CD8-positive, alpha-beta T cell (primary cell): ENCODE measurements at regions of chr5 and their contacts with region 1.

Region 1: DNA sequence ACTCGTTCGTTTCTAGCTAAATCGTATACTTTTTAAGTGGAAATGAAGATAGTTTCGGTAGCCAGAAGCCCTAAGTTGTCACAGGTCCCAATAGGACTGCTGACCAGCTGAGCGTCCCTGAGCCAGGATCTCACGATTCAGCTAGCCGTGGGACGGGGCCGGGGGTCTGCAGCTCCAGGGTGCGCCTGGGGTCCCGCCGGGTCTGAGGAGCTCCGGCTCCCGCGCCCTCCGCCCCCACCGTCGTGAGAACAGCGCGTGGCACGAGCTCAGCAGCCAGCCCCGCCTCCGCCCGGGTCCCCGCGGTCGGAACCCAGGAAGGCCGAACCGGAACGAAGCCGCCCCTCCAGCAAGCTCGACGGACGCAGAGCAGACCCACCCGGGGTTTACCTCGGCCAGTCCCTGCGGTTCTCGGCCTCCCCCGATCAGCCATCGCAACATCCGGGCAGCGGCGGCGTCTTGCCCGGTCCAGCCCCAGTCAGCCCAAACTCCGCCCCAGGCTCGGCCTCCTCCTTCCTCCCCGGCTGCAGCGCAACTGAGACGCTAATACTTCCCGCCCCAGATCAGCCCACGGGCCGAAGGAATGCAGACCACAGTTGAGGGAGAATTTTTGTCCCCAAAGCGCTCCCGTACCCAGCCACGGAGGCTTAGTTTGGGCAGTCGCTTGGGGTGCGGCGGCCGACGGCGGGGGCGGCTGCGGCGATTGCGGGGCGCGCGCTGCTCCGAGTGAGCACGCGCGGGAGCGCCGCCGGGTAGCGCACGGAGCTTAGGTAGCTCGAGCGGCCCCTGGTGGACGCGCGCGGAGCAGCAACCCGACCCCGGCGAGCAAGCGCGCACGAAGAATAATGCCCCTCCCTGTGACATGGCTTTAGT is at the start of gene WDR41:
- DNase-seq: peak; percentile 74 to 92 (median 85)
- ATAC-seq: peak; percentile 94
- H3K4me3 ChIP-seq: peak within 1 kb of the TSS; percentile 79 to 87
- H3K4me3 Mint-ChIP-seq: peak within 1 kb of the TSS; percentile 87
- H3K27ac ChIP-seq: peak within 1 kb of the TSS; percentile 79 to 85
- H3K27ac Mint-ChIP-seq: peak within 1 kb of the TSS; percentile 91
- H3K4me1 ChIP-seq: peaks cover 5% of the 10 kb centered on the region
- H3K4me1 Mint-ChIP-seq: peaks cover 13% of the 10 kb centered on the region
- H3K27me3 ChIP-seq: no peaks in the 10 kb centered on the region
- H3K27me3 Mint-ChIP-seq: peaks cover 8% of the 10 kb centered on the region
- CTCF ChIP-seq: peak; percentile 86
- total RNA-seq, gene WDR41: 4.7 to 5.3 TPM

Region 2: DNA sequence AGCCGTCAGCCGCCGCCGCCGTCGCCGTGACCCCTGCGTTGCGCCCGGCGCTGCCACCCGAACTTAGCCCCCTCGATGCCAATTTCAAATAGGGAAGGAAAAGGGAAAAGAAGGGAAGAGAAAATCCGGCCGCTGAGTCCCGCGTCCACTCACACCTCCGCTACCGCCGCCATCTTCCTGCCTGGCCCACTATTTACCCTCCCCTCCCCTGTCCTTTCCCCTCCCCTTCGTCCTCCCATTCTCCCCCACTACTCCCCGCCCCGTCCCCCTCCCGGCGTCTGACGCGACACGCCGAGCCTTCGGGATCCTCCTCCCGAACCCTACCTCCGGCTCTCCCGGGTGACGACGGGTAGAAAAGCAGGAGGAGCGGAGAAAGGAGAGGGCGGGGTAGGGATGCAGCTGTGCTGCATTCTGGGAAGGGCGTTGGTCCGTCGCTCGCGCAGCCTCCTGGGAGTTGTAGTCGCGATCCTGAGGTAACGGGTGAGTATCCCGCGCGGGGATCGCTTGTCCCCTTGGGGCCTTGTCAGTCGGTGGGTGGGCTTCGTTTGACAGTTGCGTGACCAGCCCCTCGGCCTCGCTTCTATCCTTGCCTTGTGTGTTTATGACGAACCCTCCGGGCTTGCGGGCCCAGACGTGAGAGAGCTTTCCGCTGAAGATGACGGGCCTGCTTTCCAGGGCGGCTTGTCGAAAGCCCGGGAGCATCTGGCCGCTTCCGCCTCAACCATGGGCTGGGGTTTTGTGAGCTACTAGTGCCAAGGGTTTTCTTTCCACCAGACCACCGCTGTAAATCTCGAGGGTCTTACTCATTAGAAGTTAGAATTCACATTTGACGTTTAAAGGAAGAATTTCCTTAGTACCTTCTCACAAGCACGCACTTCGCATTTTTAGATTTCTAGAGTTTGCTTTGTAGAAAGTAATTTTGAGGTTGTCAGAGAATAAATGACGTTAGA is 1980.3 kb before region 1 on chr5 and contains the starts of genes CERT1 and POLK:
- CTCF ChIA-PET with region 1: no interaction called
- POLR2A ChIA-PET with region 1: no interaction called
- intact Hi-C with region 1: loop called in 1 of 2 experiments (anchors 10 kb)
- DNase-seq: peak; percentile 78 to 97 (median 89)
- ATAC-seq: peak; percentile 87
- H3K4me3 ChIP-seq: peak within 1 kb of the TSS; percentile 72 to 79
- H3K4me3 Mint-ChIP-seq: peak within 1 kb of the TSS; percentile 96
- H3K27ac ChIP-seq: peak within 1 kb of the TSS; percentile 74 to 78
- H3K27ac Mint-ChIP-seq: peak within 1 kb of the TSS; percentile 97
- H3K4me1 ChIP-seq: peaks cover 29% of the 10 kb centered on the region
- H3K4me1 Mint-ChIP-seq: peaks cover 64% of the 10 kb centered on the region
- H3K27me3 ChIP-seq: no peaks in the 10 kb centered on the region
- H3K27me3 Mint-ChIP-seq: no peaks in the 10 kb centered on the region
- CTCF ChIP-seq: no peak
- total RNA-seq, gene CERT1: 29.2 to 36.4 TPM
- total RNA-seq, gene POLK: 6.9 to 10.0 TPM

Region 3: GRCh38 chr5:76867827-76868693 is 624.0 kb before region 1 on chr5:
- CTCF ChIA-PET with region 1: interaction called, 3 read pairs
- POLR2A ChIA-PET with region 1: no interaction called
- intact Hi-C with region 1: loop called (anchors 1 to 2 kb)
- DNase-seq: peak; percentile 27 to 67 (median 48)
- ATAC-seq: peak; percentile 84
- H3K4me3 ChIP-seq: no peak overlapping the region
- H3K4me3 Mint-ChIP-seq: no peak overlapping the region
- H3K27ac ChIP-seq: no peak overlapping the region
- H3K27ac Mint-ChIP-seq: no peak overlapping the region
- H3K4me1 ChIP-seq: no peaks in the 10 kb centered on the region
- H3K4me1 Mint-ChIP-seq: no peaks in the 10 kb centered on the region
- H3K27me3 ChIP-seq: no peaks in the 10 kb centered on the region
- H3K27me3 Mint-ChIP-seq: no peaks in the 10 kb centered on the region
- CTCF ChIP-seq: peak; percentile 69

Region 4: GRCh38 chr5:77086689-77087483 is 405.1 kb before region 1 on chr5 and contains the start of gene ZBED3:
- CTCF ChIA-PET with region 1: no interaction called
- POLR2A ChIA-PET with region 1: no interaction called
- intact Hi-C with region 1: loop called (anchors 2 to 5 kb)
- DNase-seq: peak; percentile 29 to 87 (median 68)
- ATAC-seq: peak; percentile 87
- H3K4me3 ChIP-seq: peak within 1 kb of the TSS; percentile 74
- H3K4me3 Mint-ChIP-seq: peak within 1 kb of the TSS; percentile 92
- H3K27ac ChIP-seq: peak within 1 kb of the TSS; percentile 34 to 57
- H3K27ac Mint-ChIP-seq: peak within 1 kb of the TSS; percentile 84
- H3K4me1 ChIP-seq: peaks cover 16% of the 10 kb centered on the region
- H3K4me1 Mint-ChIP-seq: peaks cover 25% of the 10 kb centered on the region
- H3K27me3 ChIP-seq: no peaks in the 10 kb centered on the region
- H3K27me3 Mint-ChIP-seq: peaks cover 2% of the 10 kb centered on the region
- CTCF ChIP-seq: peak; percentile 31
- total RNA-seq, gene ZBED3: 11.6 to 12.3 TPM

Region 5: GRCh38 chr5:77620426-77620825 is 128.4 kb after region 1 on chr5:
- CTCF ChIA-PET with region 1: no interaction called
- POLR2A ChIA-PET with region 1: no interaction called
- intact Hi-C with region 1: no loop called
- DNase-seq: no peak
- ATAC-seq: no peak
- H3K4me3 ChIP-seq: no peak overlapping the region
- H3K4me3 Mint-ChIP-seq: no peak overlapping the region
- H3K27ac ChIP-seq: no peak overlapping the region
- H3K27ac Mint-ChIP-seq: no peak overlapping the region
- H3K4me1 ChIP-seq: no peaks in the 10 kb centered on the region
- H3K4me1 Mint-ChIP-seq: no peaks in the 10 kb centered on the region
- H3K27me3 ChIP-seq: peaks cover 5 to 8% of the 10 kb centered on the region in 2 experiments
- H3K27me3 Mint-ChIP-seq: peaks cover 54% of the 10 kb centered on the region
- CTCF ChIP-seq: no peak

Region 6: DNA sequence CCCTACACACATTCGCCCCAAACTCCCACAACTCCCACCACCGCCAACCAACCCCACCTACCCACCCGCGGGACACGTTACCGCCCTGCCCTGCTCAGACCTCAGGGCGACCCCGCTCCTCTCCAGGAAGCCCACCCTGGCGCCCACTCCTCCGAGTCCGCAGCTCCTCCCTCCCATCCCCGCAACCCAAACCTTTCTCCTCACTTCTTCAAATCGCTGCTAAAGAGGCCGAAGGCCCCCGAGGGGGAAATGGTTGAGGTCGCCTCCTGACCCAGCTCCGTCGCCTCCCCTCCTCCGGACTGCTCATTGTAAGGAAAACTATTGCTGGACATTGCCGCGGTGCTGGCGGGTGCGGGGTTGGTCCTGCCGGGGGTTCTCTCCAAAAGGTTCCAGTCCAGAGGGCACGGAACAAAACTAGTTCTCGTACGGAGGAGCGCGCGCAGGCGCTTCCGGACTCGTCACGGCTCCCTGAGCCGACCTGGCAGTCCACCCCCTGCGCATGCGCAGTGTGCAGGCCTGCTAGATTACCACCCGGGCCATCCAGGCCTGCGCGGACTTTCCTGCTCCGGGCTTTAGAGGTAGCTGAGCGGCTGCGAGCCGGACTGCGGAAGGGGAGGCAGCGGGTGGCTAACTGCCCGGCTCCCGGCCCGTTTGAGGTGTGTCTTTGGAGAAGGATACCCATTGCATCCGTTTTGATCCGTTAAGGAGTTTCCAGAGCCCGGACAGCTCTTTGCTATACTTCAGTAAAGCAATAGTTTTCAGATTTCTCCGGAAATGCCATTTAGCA is 802.4 kb after region 1 on chr5 and contains the start of gene AP3B1:
- CTCF ChIA-PET with region 1: no interaction called
- POLR2A ChIA-PET with region 1: no interaction called
- intact Hi-C with region 1: loop called in 1 of 2 experiments (anchors 2 kb)
- DNase-seq: peak; percentile 92 to 99 (median 98)
- ATAC-seq: peak; percentile 90
- H3K4me3 ChIP-seq: peak within 1 kb of the TSS; percentile 70 to 99
- H3K4me3 Mint-ChIP-seq: peak within 1 kb of the TSS; percentile 99
- H3K27ac ChIP-seq: peak within 1 kb of the TSS; percentile 88 to 90
- H3K27ac Mint-ChIP-seq: peak within 1 kb of the TSS; percentile 98
- H3K4me1 ChIP-seq: peaks cover 30% of the 10 kb centered on the region
- H3K4me1 Mint-ChIP-seq: peaks cover 39% of the 10 kb centered on the region
- H3K27me3 ChIP-seq: peaks cover 0 to 2% of the 10 kb centered on the region in 2 experiments
- H3K27me3 Mint-ChIP-seq: no peaks in the 10 kb centered on the region
- CTCF ChIP-seq: no peak
- total RNA-seq, gene AP3B1: 24.8 to 25.0 TPM

Region 7: DNA sequence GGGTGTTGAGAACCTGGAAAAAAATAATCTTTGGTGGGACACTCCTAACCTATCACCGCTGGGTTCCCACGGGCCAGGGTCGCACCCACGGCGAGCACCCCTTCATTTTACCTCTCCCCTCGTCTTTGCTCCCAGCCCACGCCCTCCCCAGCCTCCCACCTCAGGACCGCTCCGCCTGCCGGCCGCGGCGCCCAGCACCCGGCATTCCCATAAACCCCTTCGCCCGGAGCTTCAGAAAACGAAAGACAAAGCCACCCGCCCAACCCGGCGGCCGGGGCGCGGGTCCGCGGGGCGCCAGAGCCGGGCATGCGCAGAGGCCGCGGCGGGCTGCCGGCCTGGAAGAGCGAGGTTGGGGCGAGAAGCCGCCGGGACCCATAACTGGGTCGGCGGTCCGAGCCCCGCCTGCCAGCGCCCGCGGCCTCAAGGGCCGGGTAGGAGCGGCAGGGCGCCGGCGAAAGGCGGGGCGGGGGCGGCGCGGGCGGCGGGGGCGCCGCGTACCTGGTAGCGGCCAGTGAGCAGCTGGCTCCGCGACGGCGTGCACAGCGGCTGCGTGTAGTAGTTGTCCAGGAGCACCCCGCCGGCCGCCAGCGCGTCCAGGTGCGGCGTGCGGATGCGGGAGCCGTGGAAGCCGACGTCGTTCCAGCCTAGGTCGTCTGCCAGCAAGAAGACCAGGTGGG is 1492.6 kb after region 1 on chr5:
- CTCF ChIA-PET with region 1: no interaction called
- POLR2A ChIA-PET with region 1: no interaction called
- intact Hi-C with region 1: loop called (anchors 10 kb)
- DNase-seq: peak; percentile 55 to 90 (median 75)
- ATAC-seq: peak; percentile 74
- H3K4me3 ChIP-seq: peak overlapping the region; percentile 54 to 68
- H3K4me3 Mint-ChIP-seq: peak overlapping the region; percentile 94
- H3K27ac ChIP-seq: peak overlapping the region; percentile 40 to 75
- H3K27ac Mint-ChIP-seq: peak overlapping the region; percentile 92
- H3K4me1 ChIP-seq: peaks cover 14% of the 10 kb centered on the region
- H3K4me1 Mint-ChIP-seq: peaks cover 28% of the 10 kb centered on the region
- H3K27me3 ChIP-seq: no peaks in the 10 kb centered on the region
- H3K27me3 Mint-ChIP-seq: no peaks in the 10 kb centered on the region
- CTCF ChIP-seq: no peak